ENCODE measurements at regions of chr19 and their contacts with region 1.

Region 1: DNA sequence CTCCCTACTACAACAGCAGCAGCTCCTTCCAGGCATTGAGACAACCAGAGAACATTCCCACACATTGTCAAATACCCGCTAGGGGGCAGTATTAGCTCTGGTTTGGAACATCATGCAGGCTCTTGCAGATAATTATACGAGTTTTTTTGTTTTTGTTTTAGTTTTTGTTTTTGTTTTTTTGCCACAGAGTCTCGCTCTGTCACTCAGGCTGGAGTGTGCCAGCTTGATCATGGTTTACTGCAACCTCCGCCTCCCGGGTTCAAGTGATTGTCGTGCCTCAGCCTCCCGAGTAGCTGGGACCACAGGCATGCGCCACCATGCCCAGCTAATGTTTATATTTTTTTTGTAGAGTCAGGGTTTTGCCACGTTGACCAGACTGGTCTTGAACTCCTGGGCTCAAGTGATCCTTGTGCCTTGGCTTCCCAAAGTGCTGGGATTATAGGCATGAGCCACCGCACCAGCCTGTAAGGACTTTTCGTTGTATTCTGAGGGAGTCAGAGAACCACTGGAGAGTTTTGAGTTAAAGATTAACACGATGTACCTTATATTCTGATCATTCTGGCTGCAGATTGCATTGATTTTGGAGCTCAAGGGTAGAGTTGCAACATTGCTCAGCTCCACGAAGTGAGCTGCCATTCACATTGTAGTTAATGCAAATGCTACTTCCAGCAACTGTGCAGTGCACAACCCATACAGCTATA is 41.7 kb upstream of the CEACAM20 start:
- DNase-seq: peak in 1 of 2 donors; percentile 54
- ATAC-seq: peak; percentile 66
- H3K4me3 ChIP-seq: no peak overlapping the region
- H3K27ac ChIP-seq: no peak overlapping the region
- H3K4me1 ChIP-seq: no peaks in the 10 kb centered on the region
- H3K27me3 ChIP-seq: no peaks in the 10 kb centered on the region

Region 2: DNA sequence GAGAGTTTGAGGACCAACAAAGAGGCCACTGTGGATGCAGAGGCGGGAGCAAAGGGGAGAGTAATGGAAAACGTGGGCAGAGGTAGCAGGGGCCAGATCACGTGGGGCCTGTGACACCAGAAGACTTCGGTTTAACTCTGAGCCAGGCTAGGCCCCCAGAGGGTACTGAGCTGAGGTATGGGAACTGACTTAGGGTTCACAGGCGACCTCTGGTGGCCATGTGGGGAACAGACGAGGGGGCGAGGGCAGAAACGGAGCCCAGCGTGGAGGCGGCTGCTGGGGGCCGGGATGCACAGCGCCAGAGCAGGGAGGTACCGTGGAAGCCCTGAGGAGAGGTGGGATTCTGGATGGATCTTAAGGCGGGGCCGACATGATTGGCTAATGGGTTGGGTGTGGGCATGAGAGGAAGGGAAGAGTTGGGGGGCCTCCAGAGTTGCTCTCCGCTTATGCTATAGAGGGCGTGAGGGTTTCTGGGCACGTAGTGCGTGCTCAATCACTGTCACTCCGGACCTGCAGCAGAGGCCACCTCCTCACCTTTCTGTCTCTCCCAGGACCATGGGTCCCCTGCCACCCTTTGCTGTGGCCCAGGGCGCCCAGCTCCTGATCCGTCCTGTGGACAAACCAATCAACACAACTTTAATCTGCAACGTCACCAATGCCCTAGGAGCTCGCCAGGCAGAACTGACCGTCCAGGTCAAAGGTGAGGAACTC is 86.2 kb after region 1 on chr19:
- intact Hi-C with region 1: loop called (anchors 2 kb)
- DNase-seq: peak; percentile 77 to 89
- ATAC-seq: peak; percentile 73
- H3K4me3 ChIP-seq: no peak overlapping the region
- H3K27ac ChIP-seq: no peak overlapping the region
- H3K4me1 ChIP-seq: no peaks in the 10 kb centered on the region
- H3K27me3 ChIP-seq: no peaks in the 10 kb centered on the region